Activated CD4-positive, alpha-beta T cell treated with anti-CD3 and anti-CD28 coated beads, Interleukin-2, amount 10 ng/mL, durations not matched to agents 24 days and 14 days (primary cell): ENCODE measurements at regions of chr13 and their contacts with region 1.

Region 1: DNA sequence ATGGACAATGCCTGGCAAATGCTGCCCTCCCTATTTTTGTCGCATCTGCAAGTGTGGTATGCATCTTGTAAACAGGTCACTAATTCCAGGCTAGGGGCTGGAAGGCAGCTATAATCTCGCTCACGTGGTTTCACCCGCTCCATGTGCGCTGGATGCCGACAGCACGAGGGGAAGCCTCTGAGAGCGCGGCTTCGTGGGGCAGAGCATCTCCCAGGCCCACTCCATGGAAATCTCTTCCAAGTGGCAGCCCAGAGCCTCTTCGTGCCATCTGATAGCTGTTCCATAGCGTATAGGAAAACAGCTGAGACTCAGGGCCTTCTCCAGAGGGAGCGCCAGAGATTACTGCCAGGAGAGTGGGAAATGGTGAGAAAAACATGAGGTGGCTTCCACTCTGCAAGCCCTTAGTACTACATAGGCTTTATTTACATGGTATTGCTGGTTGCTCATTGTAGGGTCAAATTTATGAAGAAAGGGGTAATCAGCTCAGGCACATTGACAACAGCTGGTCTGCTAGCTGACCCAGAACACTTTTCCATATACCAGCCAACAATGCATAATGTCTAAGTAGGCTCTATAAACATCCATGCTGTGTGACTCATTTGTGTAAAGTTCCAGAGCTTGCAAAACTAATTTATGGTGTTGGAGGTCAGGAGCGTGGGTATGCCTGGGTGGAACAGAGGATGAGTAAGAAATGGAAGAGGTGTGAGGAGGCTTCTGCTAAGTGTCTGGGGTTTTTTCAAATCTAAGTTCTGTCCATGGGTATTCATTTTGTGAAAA is 165.2 kb downstream of the SHISA2 start:
- DNase-seq: no peak
- H3K4me3 Mint-ChIP-seq: no peak overlapping the region
- H3K27ac Mint-ChIP-seq: peak overlapping the region; percentile 35
- H3K4me1 Mint-ChIP-seq: peaks cover 41% of the 10 kb centered on the region
- H3K27me3 Mint-ChIP-seq: no peaks in the 10 kb centered on the region

Region 2: DNA sequence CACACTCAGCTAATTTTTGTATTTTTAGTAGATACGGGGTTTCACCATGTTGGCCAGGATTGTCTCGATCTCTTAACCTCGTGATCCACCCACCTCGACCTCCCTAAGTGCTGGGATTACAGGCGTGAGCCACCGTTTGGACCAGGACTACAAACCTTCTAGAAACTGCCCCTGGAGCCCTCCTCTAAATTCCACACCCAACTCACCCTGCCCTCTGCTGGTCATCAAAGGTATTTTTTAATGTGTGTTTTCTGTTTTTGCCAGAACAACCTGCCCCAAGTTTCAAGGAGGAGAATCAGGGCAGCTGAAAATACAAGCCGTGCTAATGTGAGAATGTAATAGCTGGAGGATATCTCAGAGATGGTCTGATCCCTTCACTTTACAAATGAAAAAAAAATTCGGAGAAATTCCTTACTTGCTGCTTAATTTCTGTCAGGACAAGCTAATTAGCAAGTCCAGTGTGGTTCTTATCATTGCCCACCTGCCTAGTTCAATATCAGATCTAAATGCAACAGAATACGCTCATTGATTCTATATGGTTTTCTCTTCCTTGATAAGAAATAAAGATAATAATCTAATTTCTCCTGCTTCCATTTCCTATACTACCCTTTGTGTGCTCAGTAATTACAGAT is 510.8 kb before region 1 on chr13:
- intact Hi-C with region 1: no loop called
- DNase-seq: peak; percentile 81
- H3K4me3 Mint-ChIP-seq: no peak overlapping the region
- H3K27ac Mint-ChIP-seq: no peak overlapping the region
- H3K4me1 Mint-ChIP-seq: peaks cover 3% of the 10 kb centered on the region
- H3K27me3 Mint-ChIP-seq: peaks cover 55% of the 10 kb centered on the region

Region 3: GRCh38 chr13:25874907-25875306 is 11.7 kb before region 1 on chr13:
- intact Hi-C with region 1: loop called (anchors 1 kb)
- DNase-seq: peak; percentile 89
- H3K4me3 Mint-ChIP-seq: peak overlapping the region; percentile 54
- H3K27ac Mint-ChIP-seq: peak overlapping the region; percentile 17
- H3K4me1 Mint-ChIP-seq: peaks cover 62% of the 10 kb centered on the region
- H3K27me3 Mint-ChIP-seq: no peaks in the 10 kb centered on the region